Tibial artery (tissue), 4 donors: ENCODE measurements at regions of chr3 and their contacts with region 1.

Region 1: GRCh38 chr3:190614226-190615059 is 100.6 kb downstream of the IL1RAP start:
- DNase-seq: no peak
- H3K4me3 ChIP-seq: no peak overlapping the region
- H3K27ac ChIP-seq: no peak overlapping the region
- H3K4me1 ChIP-seq: no peaks in the 10 kb centered on the region
- H3K27me3 ChIP-seq: no peaks in the 10 kb centered on the region
- CTCF ChIP-seq: no peak

Region 2: GRCh38 chr3:191066669-191067068 is 452.2 kb after region 1 on chr3:
- intact Hi-C with region 1: loop called (anchors 5 kb)
- DNase-seq: no peak
- H3K4me3 ChIP-seq: no peak overlapping the region
- H3K27ac ChIP-seq: no peak overlapping the region
- H3K4me1 ChIP-seq: no peaks in the 10 kb centered on the region
- H3K27me3 ChIP-seq: no peaks in the 10 kb centered on the region
- CTCF ChIP-seq: no peak